ENCODE measurements at regions of chr15 and their contacts with region 1.

Region 1: DNA sequence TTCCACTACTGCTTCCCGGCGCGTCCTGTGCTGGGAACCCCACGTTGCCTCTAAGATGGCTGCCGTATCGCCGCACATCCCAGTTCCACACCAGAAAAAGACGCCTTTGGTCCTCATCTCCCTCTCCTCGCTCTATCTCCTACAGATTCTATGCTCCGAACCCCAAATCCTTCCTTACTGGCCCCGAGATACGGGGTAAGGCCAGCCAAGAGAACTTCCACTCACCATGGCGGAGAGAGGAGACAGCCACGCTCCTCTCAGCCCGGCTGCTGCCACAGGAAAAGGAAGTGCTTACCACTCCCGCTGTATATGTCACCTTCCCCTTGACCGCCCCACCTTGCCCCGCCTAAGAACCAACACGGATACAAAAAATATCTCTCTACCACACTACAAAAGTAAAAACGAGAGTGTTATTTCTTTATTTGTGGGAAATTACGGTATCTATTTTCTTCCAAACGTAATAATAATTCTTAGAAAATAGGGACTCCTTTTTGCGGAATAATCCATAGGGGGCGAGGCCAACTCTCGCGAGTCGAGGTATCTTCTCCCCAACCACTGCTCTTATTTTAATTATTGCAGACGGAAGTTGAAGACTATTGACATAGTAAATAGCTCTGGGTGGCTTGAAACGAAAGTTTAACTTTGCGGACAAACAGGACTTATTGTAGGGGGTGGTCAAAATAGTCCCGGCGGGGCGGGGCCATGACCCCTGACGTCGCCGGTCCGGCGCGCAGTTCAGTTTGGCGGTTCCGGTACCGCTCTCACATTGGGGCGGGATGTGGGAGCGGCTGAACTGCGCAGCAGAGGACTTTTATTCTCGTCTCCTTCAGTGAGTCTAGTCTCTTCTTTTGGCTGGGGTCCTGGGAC is at the starts of genes RPL4 and ZWILCH:
- DNase-seq: peak; percentile 70 to 96
- H3K4me3 ChIP-seq: peak within 1 kb of the TSS; percentile 78
- CTCF ChIP-seq: no peak
- POLR2A ChIP-seq: peak in 1 of 2 donors; percentile 77
- total RNA-seq, gene RPL4: 4,479 to 8,244 (median 6,347) TPM
- total RNA-seq, gene ZWILCH: 2.3 to 4.9 (median 3.6) TPM

Region 2: GRCh38 chr15:65212097-65212496 is 1292.7 kb before region 1 on chr15:
- intact Hi-C with region 1: loop called (anchors 5 kb)
- DNase-seq: no peak
- H3K4me3 ChIP-seq: no peak overlapping the region
- CTCF ChIP-seq: no peak
- POLR2A ChIP-seq: no peak